ENCODE measurements at regions of chr5 and their contacts with region 1.

Region 1: DNA sequence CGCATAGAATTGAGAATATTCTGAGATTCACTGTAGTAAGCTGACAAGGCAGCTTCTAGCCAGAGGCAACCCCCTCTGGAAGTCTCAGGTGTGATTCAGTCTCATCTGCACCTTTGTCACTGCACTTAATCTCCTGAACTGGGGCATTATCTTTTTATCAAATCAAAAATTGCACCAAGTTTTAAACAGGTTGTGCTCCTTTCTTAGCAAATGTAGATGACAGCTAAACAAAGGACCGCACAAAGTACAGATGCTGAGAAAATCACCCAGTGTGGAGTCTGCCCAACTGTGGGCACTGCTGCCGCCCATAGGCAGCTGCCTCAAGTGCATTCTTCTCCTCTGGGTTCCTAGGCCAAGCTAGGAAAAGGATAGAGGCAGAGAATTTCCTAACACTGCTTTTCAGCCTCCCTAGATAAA is 51.1 kb downstream of the STARD4 start:
- DNase-seq: no peak
- H3K4me3 Mint-ChIP-seq: no peak overlapping the region
- H3K27ac Mint-ChIP-seq: no peak overlapping the region
- H3K4me1 Mint-ChIP-seq: no peaks in the 10 kb centered on the region
- H3K27me3 Mint-ChIP-seq: no peaks in the 10 kb centered on the region
- CTCF ChIP-seq: no peak

Region 2: DNA sequence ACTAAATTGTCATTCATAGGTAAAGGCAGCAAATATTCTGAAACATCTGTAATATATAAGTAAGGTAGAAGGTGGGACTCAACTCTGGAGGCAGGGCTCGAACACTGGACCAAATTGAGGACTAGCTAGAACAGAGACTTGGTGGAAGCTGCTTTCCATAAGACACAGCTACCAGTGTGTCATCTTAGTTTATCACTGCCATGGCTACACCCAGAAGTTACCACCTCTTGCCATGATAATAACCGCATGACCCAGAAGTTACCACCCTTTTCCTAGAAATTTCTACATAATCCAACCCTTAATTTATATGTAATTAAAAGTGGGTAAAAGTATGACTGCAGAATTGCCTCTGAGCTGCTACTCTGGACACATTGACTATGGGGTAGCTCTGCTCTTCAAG is 48.7 kb before region 1 on chr5:
- CTCF ChIA-PET with region 1: interaction called, 11 read pairs
- intact Hi-C with region 1: no loop called
- DNase-seq: no peak
- H3K4me3 Mint-ChIP-seq: no peak overlapping the region
- H3K27ac Mint-ChIP-seq: no peak overlapping the region
- H3K4me1 Mint-ChIP-seq: no peaks in the 10 kb centered on the region
- H3K27me3 Mint-ChIP-seq: no peaks in the 10 kb centered on the region
- CTCF ChIP-seq: no peak

Region 3: DNA sequence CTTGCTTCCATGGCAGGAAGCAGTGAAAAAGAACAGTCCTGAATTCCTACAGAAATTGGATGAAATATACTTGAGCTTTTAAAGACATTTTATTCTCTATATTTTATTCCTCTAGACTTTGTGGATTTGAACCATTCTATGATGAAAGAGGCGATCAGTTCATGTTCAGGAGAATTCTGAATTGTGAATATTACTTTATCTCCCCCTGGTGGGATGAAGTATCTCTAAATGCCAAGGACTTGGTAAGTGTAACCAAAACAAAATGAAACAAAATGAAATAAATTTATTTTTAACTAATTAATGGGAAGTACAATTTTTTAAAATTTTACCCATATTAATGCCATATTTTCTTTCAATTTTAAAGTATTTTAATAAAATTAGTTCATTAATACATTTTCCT is 17.0 kb after region 1 on chr5:
- CTCF ChIA-PET with region 1: no interaction called
- intact Hi-C with region 1: no loop called
- DNase-seq: no peak
- H3K4me3 Mint-ChIP-seq: no peak overlapping the region
- H3K27ac Mint-ChIP-seq: no peak overlapping the region
- H3K4me1 Mint-ChIP-seq: no peaks in the 10 kb centered on the region
- H3K27me3 Mint-ChIP-seq: no peaks in the 10 kb centered on the region
- CTCF ChIP-seq: no peak